HEK293T (cell line): ENCODE measurements at regions of chr7 and their contacts with region 1.

Region 1: GRCh38 chr7:33932832-33933468 is 27.6 kb downstream of the BMPER start:
- DNase-seq: peak; percentile 83

Region 2: DNA sequence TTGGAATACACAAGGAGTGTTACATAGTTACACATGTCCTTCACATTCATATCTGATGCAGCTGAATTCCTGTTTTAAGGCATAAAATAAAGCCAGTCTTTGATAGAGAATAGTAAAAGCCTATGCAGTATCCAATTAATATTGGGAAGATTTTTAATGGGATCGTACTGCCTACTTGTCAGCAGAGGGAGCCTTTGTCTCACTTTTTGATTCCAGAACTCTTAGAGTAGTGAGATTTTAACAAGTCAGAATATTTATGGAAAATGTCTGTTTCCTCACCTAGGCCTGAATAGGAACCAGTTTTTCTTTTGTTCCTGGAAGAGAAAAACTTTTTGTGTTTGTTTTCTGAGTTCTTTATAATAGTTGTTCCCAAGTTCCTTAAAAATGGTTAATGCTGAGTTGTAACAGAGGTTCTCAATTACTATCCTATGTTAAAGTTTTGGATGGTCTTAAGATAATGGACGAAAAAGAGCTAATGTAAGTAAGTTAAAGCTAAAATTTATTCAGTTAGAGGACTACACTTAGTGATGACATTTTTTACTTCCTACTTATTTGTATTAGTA is 689.5 kb before region 1 on chr7:
- CTCF ChIA-PET with region 1: interaction called, 10 read pairs
- POLR2A ChIA-PET with region 1: no interaction called
- DNase-seq: peak; percentile 36

Region 3: DNA sequence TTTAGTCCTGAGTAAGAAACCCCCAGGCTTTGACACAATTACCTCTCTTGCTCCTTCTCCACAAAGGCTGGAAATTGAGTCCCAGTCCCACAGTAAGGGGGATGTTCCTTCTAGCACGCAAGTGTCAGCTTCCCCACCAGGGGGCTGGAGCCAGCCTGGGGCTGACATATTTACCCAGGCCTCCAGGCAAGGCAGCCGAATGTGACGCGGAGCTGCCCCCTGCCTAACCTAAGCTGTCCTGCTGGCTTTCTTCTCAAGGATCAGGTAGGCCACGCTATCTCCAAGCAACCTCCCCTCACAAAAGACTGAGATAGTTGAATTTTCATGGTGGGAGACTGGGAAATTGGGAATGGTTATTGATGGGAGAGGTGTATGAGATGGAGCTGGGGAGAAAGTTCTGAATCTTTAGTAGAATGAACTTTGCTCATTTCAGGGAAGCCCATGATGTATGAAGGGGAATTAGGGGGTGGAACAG is 46.8 kb before region 1 on chr7:
- CTCF ChIA-PET with region 1: interaction called, 20 read pairs
- POLR2A ChIA-PET with region 1: no interaction called
- DNase-seq: peak; percentile 81

Region 4: GRCh38 chr7:33904681-33905388 is 28.1 kb before region 1 on chr7:
- CTCF ChIA-PET with region 1: interaction called, 18 read pairs
- POLR2A ChIA-PET with region 1: no interaction called
- DNase-seq: peak; percentile 50

Region 5: DNA sequence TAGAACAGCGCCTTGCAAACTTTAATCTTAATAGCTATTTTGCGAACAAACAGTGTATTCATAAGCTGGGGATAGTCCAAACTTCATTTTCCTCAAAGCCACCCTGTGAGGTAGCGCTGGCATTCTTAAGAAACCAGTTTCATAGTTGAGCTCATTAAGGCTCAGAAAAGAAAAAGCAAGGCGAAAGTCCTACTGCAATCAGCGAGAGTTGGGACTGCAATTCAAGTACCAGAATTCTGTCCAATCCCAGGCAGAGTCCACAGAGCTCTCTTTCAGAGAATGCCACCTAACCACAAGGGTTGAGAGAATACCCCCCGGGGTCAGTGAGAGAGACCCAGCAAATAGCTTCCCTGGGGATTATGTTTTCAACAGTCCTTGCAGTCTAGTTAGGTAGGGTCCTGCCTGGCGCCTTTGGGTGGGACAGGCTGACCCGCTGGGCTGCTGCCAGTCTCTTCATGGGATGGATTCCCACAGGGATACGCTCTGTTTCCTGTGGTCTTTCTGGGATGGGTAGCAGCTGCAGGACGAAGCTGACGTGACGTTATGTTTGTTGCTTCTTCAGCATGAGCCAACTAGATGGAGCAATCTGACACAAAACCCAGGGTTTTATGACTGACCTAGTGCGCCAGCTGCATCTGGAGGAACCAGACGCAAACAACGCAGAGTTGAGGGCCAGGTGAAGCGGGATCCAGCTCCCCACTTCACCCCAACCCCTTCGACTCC is 11.6 kb before region 1 on chr7:
- CTCF ChIA-PET with region 1: interaction called, 11 read pairs
- POLR2A ChIA-PET with region 1: interaction called, 3 read pairs
- DNase-seq: no peak

Region 6: GRCh38 chr7:34019301-34019790 is 86.4 kb after region 1 on chr7:
- CTCF ChIA-PET with region 1: no interaction called
- POLR2A ChIA-PET with region 1: no interaction called
- DNase-seq: no peak